PC-3 (cell line): ENCODE measurements at regions of chr1 and their contacts with region 1.

Region 1: GRCh38 chr1:162502928-162503327 is 5.3 kb downstream of the UHMK1 start:
- DNase-seq: peak; percentile 81
- ATAC-seq: peak; percentile 75
- H3K4me3 ChIP-seq: peak overlapping the region; percentile 33; the same call in 1 of the 2 replicates
- H3K27ac ChIP-seq: peak overlapping the region; percentile 46
- H3K4me1 ChIP-seq: peaks cover 41% of the 10 kb centered on the region
- H3K27me3 ChIP-seq: no peaks in the 10 kb centered on the region
- CTCF ChIP-seq: no peak

Region 2: DNA sequence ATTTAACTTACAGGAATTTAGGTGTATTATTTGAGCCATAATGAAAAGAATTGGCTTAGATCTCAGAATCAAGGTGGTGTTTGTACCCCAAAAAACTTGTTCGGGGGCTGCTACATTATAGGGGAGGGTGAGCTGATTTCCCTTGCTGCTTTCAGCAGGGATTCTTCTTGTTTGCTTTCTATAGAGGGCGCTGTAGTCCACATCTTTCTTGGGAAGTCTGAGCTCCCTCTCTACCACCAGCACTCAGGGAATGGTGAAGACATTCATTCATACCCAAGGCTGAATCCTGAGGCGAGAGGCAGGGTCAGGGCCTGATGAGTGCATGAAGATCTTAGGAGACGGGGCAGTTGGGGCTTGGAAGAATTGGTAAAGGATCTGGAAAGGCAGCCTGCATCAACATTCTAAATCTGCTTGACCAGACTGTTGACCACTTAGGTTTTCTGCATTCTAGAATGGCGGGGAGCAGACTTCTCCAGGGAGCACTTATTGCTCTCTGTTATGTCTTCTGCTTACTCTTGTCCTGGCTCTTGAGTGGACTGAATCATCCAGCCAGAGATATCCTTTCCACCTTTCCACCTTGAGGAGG is 145.2 kb before region 1 on chr1:
- CTCF ChIA-PET with region 1: no interaction called
- POLR2A ChIA-PET with region 1: no interaction called
- intact Hi-C with region 1: loop called (anchors 5 kb)
- DNase-seq: peak; percentile 75
- ATAC-seq: peak; percentile 70
- H3K4me3 ChIP-seq: no peak overlapping the region
- H3K27ac ChIP-seq: no peak overlapping the region
- H3K4me1 ChIP-seq: no peaks in the 10 kb centered on the region
- H3K27me3 ChIP-seq: no peaks in the 10 kb centered on the region
- CTCF ChIP-seq: peak; percentile 92

Region 3: GRCh38 chr1:162561037-162561616 is 58.2 kb after region 1 on chr1:
- CTCF ChIA-PET with region 1: no interaction called
- POLR2A ChIA-PET with region 1: interaction called, 3 read pairs
- intact Hi-C with region 1: loop called (anchors 2 kb)
- DNase-seq: peak; percentile 99
- ATAC-seq: peak; percentile 91
- H3K4me3 ChIP-seq: peak overlapping the region; percentile 94
- H3K27ac ChIP-seq: peak overlapping the region; percentile 69
- H3K4me1 ChIP-seq: peaks cover 36% of the 10 kb centered on the region
- H3K27me3 ChIP-seq: no peaks in the 10 kb centered on the region
- CTCF ChIP-seq: no peak

Region 4: DNA sequence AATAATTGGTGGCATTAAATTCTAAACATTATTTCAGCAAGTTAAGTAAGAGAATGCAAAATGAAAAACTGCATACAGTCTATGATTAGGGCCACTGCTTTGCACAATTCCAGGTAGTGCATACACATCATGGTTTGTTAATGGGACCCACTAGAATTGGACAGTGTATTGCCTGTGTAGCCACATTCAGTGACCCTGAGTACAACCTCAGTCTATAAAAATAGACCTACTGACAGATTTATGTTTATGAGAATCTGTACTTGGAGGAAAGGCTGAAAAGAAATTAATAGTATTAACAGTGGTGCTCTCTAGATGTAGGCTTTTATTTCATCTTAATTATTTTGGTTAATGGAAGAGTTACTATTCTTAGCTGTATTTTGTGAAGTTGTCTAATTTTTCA is 77.4 kb after region 1 on chr1:
- CTCF ChIA-PET with region 1: no interaction called
- POLR2A ChIA-PET with region 1: no interaction called
- intact Hi-C with region 1: loop called (anchors 5 kb)
- DNase-seq: no peak
- ATAC-seq: no peak
- H3K4me3 ChIP-seq: no peak overlapping the region
- H3K27ac ChIP-seq: no peak overlapping the region
- H3K4me1 ChIP-seq: peaks cover 14% of the 10 kb centered on the region; the same call in 1 of the 2 replicates
- H3K27me3 ChIP-seq: no peaks in the 10 kb centered on the region
- CTCF ChIP-seq: no peak